ENCODE measurements at regions of chr4 and their contacts with region 1.

Region 1: GRCh38 chr4:138090150-138090917 is 151.8 kb downstream of the SLC7A11 start:
- DNase-seq: peak; percentile 75
- CTCF ChIP-seq: peak; percentile 77

Region 2: GRCh38 chr4:138035781-138036258 is 54.5 kb before region 1 on chr4:
- CTCF ChIA-PET with region 1: interaction called, 12 read pairs
- POLR2A ChIA-PET with region 1: no interaction called
- DNase-seq: peak; percentile 56
- CTCF ChIP-seq: peak; percentile 50

Region 3: DNA sequence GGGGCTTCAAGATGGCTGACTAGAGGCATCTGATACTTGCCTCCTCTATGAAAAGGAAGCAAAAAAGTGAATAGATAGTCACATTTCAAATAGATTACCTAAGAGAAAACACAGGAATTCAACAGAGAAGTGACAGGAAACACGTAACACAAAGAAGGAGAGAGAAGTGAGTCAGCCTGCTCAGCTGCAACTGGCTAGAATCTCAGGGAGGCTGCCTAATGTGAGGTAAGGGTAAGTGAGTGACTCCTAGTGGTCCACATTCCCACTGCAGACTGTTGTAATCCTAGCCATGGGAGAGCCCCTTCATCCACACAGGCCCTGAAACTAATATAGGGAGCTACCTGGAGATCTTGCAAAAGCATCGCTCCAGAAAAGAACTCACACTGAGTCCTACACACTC is 27.4 kb before region 1 on chr4:
- CTCF ChIA-PET with region 1: interaction called, 13 read pairs
- POLR2A ChIA-PET with region 1: no interaction called
- DNase-seq: no peak
- CTCF ChIP-seq: no peak

Region 4: GRCh38 chr4:138104284-138104680 is 13.9 kb after region 1 on chr4:
- CTCF ChIA-PET with region 1: interaction called, 38 read pairs
- POLR2A ChIA-PET with region 1: no interaction called
- DNase-seq: no peak
- CTCF ChIP-seq: no peak

Region 5: DNA sequence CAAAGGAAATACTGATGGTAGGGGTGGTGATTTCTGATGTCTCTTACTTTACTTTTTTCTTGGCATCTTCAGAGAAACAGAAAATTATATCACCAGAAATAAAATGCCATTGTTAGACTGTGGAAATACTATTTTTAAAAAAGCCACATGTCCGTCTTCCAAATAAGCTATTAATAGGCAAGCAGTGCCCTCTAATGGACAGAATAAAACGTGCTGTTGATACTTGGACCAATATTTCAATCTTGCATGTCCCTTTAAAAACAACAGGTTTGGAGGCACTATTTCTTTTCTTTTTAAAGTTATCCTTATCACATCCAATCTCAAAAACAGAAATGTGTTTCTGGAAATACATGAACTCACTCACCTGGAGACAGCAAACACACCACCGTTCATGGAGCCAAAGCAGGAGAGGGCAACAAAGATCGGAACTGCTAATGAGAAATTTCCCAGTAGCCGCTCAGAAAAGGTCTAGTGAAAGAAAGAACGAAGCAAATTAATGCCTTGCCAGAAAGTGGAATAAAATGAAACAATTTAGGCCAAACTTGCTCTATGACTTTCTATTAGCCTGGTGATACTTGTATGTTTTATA is 92.6 kb after region 1 on chr4:
- CTCF ChIA-PET with region 1: interaction called, 10 read pairs
- POLR2A ChIA-PET with region 1: no interaction called
- DNase-seq: peak; percentile 10
- CTCF ChIP-seq: peak; percentile 65

Measured in GM10248 (cell line).